ENCODE measurements at regions of chr3 and their contacts with region 1.

Region 1: GRCh38 chr3:184481984-184482671 is 79.5 kb upstream of the EPHB3 start:
- DNase-seq: no peak
- H3K4me3 ChIP-seq: no peak overlapping the region
- CTCF ChIP-seq: no peak

Region 2: GRCh38 chr3:184443380-184443779 is 38.7 kb before region 1 on chr3:
- in situ Hi-C with region 1: no loop called
- DNase-seq: no peak
- H3K4me3 ChIP-seq: no peak overlapping the region
- CTCF ChIP-seq: no peak

Region 3: DNA sequence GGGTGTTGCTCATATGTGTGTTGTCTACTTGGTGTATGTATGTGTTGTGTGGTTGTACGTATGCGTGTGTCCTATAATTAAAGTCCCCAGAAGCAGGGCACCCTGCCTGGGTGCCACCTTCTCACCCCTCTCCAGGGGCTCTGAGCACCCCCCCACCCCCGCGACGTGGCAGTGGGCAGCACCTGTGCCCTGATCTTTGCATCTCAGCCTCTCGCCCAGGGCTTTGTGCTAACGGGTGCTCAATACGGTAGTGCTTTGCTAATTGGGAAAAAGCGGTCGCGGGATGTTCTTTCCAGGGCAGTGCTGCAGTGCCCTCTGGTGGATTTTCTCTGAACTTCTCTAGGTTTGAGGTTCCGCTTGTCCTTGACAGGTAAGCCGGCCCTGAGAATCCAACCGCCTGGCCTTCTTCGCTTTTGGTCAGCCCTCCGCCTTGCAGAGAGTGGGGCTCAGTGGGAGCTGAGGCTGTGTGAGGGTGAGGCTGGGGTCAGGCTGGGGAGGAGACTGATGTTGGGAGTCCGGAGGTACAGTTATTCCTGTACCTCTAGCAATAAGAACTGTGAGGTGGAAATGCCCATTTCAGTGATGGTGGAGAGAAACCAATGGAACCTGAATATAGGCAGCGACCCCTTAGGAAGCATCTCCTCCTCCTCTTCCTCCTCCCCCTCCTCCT is 61.9 kb after region 1 on chr3:
- in situ Hi-C with region 1: loop called (anchors 5 kb)
- DNase-seq: peak; percentile 78
- H3K4me3 ChIP-seq: no peak overlapping the region
- CTCF ChIP-seq: peak; percentile 85